Dendritic cell treated with granulocyte-macrophage colony-stimulating factor and Interleukin-4, amounts not matched to agents 40 ng/mL and 50 ng/mL, for 4 days (primary cell): ENCODE measurements at regions of chr9 and their contacts with region 1.

Region 1: GRCh38 chr9:83980395-83981125 is at the start of gene RMI1:
- H3K4me3 Mint-ChIP-seq: peak within 1 kb of the TSS; percentile 97
- H3K27ac Mint-ChIP-seq: peak within 1 kb of the TSS; percentile 99
- H3K4me1 Mint-ChIP-seq: peaks cover 37% of the 10 kb centered on the region
- H3K27me3 Mint-ChIP-seq: no peaks in the 10 kb centered on the region

Region 2: GRCh38 chr9:83707768-83708514 is 272.6 kb before region 1 on chr9 and contains the start of gene UBQLN1:
- intact Hi-C with region 1: loop called (anchors 10 kb)
- H3K4me3 Mint-ChIP-seq: peak within 1 kb of the TSS; percentile 97
- H3K27ac Mint-ChIP-seq: peak within 1 kb of the TSS; percentile 100
- H3K4me1 Mint-ChIP-seq: peaks cover 35% of the 10 kb centered on the region
- H3K27me3 Mint-ChIP-seq: no peaks in the 10 kb centered on the region

Region 3: GRCh38 chr9:83920927-83921707 is 59.4 kb before region 1 on chr9 and contains the start of gene KIF27:
- intact Hi-C with region 1: loop called (anchors 1 kb)
- H3K4me3 Mint-ChIP-seq: peak within 1 kb of the TSS; percentile 79
- H3K27ac Mint-ChIP-seq: peak within 1 kb of the TSS; percentile 90
- H3K4me1 Mint-ChIP-seq: peaks cover 25% of the 10 kb centered on the region
- H3K27me3 Mint-ChIP-seq: no peaks in the 10 kb centered on the region

Region 4: GRCh38 chr9:83956434-83957247 is 23.9 kb before region 1 on chr9:
- intact Hi-C with region 1: loop called (anchors 1 kb)
- H3K4me3 Mint-ChIP-seq: peak overlapping the region; percentile 89
- H3K27ac Mint-ChIP-seq: peak overlapping the region; percentile 99
- H3K4me1 Mint-ChIP-seq: peaks cover 15% of the 10 kb centered on the region
- H3K27me3 Mint-ChIP-seq: no peaks in the 10 kb centered on the region

Region 5: GRCh38 chr9:83967083-83967482 is 13.5 kb before region 1 on chr9:
- intact Hi-C with region 1: no loop called
- H3K4me3 Mint-ChIP-seq: no peak overlapping the region
- H3K27ac Mint-ChIP-seq: peak overlapping the region; percentile 5
- H3K4me1 Mint-ChIP-seq: peaks cover 5% of the 10 kb centered on the region
- H3K27me3 Mint-ChIP-seq: no peaks in the 10 kb centered on the region

Region 6: DNA sequence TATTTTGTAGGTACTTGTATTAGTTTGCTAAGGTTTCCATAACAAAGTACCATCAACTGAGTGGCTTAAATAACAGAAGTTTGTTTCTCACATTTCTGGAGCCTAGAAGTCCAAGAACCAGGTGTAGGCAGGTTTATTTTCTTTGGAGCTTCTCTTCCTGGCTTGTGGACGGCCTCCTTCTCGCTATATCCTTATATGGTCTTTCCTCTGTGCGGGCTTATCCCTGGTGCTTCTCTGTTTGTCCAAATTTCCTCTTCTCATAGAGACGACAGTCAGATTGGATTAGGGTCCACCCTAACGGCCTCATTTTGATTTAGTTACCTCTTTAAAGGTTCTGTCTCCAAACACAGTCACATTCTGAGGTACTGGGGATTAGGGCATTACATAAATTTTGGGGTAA is 88.3 kb after region 1 on chr9:
- intact Hi-C with region 1: no loop called
- H3K4me3 Mint-ChIP-seq: no peak overlapping the region
- H3K27ac Mint-ChIP-seq: no peak overlapping the region
- H3K4me1 Mint-ChIP-seq: no peaks in the 10 kb centered on the region
- H3K27me3 Mint-ChIP-seq: no peaks in the 10 kb centered on the region

Region 7: DNA sequence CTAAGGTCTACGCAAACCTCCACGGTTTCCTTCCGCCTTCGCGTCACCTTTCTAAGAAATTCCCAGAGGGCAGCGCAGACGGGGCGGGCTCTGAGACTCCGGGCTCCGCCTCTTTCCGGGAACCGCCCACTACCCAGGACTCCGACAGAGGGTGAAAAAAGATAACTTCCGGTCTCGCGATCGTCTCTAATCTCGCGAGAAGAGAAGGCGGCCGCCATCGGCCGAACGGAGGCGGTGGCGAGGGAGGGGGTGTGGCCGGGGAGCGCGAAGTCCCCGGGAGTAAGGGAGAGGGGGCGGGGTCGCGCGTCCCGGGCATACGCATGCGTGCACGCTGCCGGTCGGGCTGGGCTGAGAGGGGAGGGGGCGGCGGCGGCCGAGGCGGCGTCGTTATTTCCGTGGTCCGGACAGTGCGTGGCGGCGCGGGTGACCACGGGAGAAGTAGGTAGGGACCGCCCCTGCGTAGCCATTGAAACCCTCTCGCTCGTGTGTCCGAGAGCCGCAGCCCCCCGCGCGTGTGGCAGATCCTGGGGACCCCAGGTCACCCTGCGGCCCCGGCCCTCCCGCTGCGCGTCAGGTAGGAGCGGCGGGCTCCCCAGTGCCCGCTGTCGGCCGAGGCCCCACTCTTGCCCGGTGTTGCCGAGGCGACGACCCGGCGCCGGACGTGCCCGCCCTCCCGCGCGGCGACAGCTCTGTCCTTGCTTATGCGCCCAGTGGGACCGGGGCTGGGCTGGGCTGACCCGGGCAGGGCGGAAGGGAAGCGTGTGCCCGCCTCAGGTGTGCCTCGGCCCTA is 1960.5 kb after region 1 on chr9 and contains the start of gene NAA35:
- intact Hi-C with region 1: loop called (anchors 5 kb)
- H3K4me3 Mint-ChIP-seq: peak within 1 kb of the TSS; percentile 92
- H3K27ac Mint-ChIP-seq: peak within 1 kb of the TSS; percentile 85
- H3K4me1 Mint-ChIP-seq: peaks cover 6% of the 10 kb centered on the region
- H3K27me3 Mint-ChIP-seq: no peaks in the 10 kb centered on the region